PC-9 (cell line): ENCODE measurements at regions of chr20 and their contacts with region 1.

Region 1: GRCh38 chr20:57772276-57773030 is 62.6 kb upstream of the PMEPA1 start:
- DNase-seq: peak; percentile 89 to 92
- H3K4me3 ChIP-seq: no peak overlapping the region
- H3K27ac ChIP-seq: no peak overlapping the region
- H3K4me1 ChIP-seq: peaks cover 26% of the 10 kb centered on the region
- H3K27me3 ChIP-seq: no peaks in the 10 kb centered on the region
- CTCF ChIP-seq: no peak

Region 2: GRCh38 chr20:57596998-57597939 is 175.2 kb before region 1 on chr20:
- CTCF ChIA-PET with region 1: no interaction called
- POLR2A ChIA-PET with region 1: no interaction called
- intact Hi-C with region 1: no loop called
- DNase-seq: peak in 1 of 2 experiments; percentile 73
- H3K4me3 ChIP-seq: peak overlapping the region; percentile 43; the same call in 1 of the 2 replicates
- H3K27ac ChIP-seq: no peak overlapping the region
- H3K4me1 ChIP-seq: peaks cover 4% of the 10 kb centered on the region; the same call in 1 of the 2 replicates
- H3K27me3 ChIP-seq: peaks cover 6% of the 10 kb centered on the region; the same call in 1 of the 2 replicates
- CTCF ChIP-seq: peak; percentile 97

Region 3: DNA sequence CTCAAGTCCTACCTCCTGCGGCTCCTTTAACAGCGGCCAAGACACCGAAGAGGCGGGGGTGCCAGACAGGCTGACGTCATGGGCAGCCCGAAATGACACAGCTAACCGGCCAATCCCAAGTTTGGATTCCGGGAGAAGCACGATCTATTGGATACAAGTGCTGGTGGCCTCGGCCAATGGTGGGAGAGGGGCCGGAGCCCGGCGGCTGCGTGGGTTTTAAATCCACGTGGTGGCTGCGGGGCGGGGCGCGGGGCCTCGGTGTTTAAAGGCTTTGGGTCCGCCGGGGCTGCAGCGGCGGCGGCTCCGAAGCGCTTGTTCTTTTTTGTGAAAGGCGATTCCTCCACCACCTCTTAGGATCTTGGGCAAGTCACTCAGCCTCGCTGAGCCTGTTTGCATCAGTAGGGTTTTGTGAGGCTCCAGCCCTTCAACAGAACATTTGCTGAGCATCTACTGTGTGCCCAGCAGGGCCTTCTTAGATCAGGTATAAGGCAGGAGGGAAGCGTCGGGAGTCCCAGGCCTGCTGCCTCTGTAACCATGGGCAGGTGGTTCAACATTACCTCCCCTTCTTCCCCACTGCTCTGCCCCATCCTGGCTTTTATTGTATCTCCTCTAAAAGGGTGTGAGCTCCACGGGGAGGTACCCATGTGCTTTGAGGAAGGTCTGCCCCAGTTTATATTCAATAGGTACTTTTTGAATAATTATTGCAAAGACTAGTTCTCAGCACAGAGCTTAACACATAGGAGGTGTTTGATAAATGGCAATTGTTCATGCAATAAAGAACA is 53.8 kb before region 1 on chr20:
- CTCF ChIA-PET with region 1: no interaction called
- POLR2A ChIA-PET with region 1: no interaction called
- intact Hi-C with region 1: loop called (anchors 2 kb)
- DNase-seq: peak; percentile 97 to 98
- H3K4me3 ChIP-seq: peak overlapping the region; percentile 60
- H3K27ac ChIP-seq: peak overlapping the region; percentile 76
- H3K4me1 ChIP-seq: peaks cover 41% of the 10 kb centered on the region
- H3K27me3 ChIP-seq: no peaks in the 10 kb centered on the region
- CTCF ChIP-seq: no peak

Region 4: GRCh38 chr20:57785720-57786119 is 13.3 kb after region 1 on chr20:
- CTCF ChIA-PET with region 1: no interaction called
- POLR2A ChIA-PET with region 1: interaction called, 12 read pairs
- intact Hi-C with region 1: no loop called
- DNase-seq: no peak
- H3K4me3 ChIP-seq: no peak overlapping the region
- H3K27ac ChIP-seq: no peak overlapping the region
- H3K4me1 ChIP-seq: no peaks in the 10 kb centered on the region
- H3K27me3 ChIP-seq: no peaks in the 10 kb centered on the region
- CTCF ChIP-seq: no peak

Region 5: GRCh38 chr20:57810511-57811373 is 38.3 kb after region 1 on chr20:
- CTCF ChIA-PET with region 1: interaction called, 7 read pairs
- POLR2A ChIA-PET with region 1: interaction called, 3 read pairs
- intact Hi-C with region 1: loop called (anchors 2 kb)
- DNase-seq: peak; percentile 86 to 91
- H3K4me3 ChIP-seq: no peak overlapping the region
- H3K27ac ChIP-seq: peak overlapping the region; percentile 38; the same call in 1 of the 2 replicates
- H3K4me1 ChIP-seq: peaks cover 25% of the 10 kb centered on the region
- H3K27me3 ChIP-seq: no peaks in the 10 kb centered on the region
- CTCF ChIP-seq: no peak

Region 6: DNA sequence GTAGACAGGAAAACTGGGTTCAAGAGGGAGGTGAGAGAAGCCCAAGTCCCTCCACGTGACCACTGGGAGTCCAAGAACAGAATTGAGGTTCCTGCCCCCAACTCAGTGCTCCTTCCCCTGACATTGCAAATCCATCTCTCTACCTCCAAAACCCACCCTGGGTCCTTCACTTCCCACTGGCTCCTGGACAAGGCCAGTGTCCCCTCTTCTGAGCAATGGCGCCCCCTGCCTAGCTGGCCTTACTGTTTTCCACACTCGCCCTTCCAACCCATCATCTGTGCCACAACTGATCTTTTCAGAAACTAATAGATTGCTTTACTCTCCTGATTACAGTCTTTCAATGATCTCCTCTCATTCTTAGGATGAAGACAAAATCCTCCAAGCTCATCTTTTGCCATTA is 255.7 kb after region 1 on chr20:
- CTCF ChIA-PET with region 1: no interaction called
- POLR2A ChIA-PET with region 1: no interaction called
- intact Hi-C with region 1: no loop called
- DNase-seq: no peak
- H3K4me3 ChIP-seq: no peak overlapping the region
- H3K27ac ChIP-seq: no peak overlapping the region
- H3K4me1 ChIP-seq: peaks cover 15% of the 10 kb centered on the region
- H3K27me3 ChIP-seq: no peaks in the 10 kb centered on the region
- CTCF ChIP-seq: no peak; the same call in 1 of the 2 replicates